CD8-positive, alpha-beta T cell (primary cell): ENCODE measurements at regions of chrX and their contacts with region 1.

Region 1: DNA sequence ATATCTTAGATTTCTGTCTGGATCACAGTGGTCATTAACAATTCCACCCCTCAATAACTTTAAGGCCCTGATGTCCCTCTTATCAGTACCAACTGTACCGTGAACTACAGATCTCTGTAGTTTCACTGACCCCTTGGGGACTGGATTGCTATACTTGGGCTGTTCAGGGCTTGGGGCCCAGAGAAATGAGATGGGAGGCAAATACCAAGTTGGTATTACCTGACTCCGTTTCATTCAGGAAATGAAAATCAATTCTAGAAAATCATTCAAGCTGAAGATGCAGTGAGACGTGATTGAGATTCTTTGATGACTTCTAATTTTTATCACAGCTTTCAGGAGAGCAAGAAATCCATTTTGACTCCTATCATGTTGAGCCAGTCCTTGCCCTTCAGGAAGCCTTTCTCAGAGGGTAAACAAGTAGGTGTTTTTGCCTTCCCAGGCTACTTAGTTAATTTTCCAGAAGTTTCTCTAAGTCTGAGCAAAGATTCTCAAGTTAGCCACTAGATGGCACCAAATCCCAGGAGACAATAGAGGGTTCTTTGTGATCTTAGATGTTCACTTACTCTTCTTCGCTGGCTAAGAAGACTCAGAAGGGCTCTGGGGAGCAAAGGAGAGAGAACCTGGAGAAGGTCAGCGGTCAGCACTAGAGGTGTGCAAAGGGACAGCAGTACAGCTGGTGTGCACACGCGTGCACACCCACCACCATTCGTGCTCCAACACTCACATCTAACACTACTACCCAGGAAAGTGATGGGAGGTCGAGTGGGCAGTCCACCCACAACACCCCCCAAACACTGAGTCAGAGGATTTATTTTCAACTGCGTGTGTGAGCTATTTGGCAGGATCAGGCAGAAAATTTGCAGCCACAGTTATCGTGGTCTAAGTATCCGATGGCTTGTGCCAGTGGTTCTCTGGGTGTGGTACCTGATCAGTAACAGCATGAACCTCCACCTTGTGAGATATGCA is 7.4 kb downstream of the HNRNPH2 start:
- DNase-seq: peak in 5 of 9 experiments; percentile 11 to 83 (median 38)
- ATAC-seq: peak; percentile 79
- H3K4me3 ChIP-seq: no peak overlapping the region
- H3K4me3 Mint-ChIP-seq: peak overlapping the region; percentile 55
- H3K27ac ChIP-seq: peak overlapping the region in 1 of 2 experiments; percentile 70
- H3K27ac Mint-ChIP-seq: peak overlapping the region; percentile 85
- H3K4me1 ChIP-seq: peaks cover 22% of the 10 kb centered on the region
- H3K4me1 Mint-ChIP-seq: peaks cover 59% of the 10 kb centered on the region
- H3K27me3 ChIP-seq: no peaks in the 10 kb centered on the region
- H3K27me3 Mint-ChIP-seq: no peaks in the 10 kb centered on the region
- CTCF ChIP-seq: peak; percentile 57

Region 2: DNA sequence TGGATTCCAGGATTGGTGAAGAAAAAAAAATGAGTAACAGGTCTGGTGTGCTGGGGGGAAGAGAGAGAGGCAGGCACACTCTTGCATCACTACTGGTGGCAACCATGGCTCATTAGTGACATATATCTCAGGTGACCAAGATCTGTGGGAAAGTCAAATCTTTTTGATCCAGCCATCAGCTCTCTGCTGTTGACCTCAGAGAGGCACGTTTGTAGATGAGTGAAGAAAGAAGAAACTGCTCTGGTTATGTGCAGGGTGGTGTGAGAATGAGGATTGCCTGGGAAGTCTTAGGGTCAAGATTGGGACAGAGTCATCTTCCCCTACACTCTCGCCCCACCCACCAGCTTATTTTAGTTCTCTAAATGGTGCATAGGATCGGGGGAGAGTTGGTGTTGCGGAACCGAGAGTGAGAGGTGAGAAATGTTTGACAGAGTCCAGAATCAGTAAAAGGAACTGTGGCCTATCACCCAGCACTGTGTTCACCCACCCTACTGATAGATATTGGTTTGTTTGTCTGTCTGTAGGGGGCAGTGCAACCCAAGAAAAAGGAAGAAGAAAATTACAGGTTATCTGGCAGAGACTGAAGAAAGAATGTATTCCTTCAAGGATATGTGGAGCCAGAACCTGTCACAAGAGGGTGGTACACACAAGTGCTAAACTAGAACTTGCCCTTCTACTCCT is 180.4 kb after region 1 on chrX:
- CTCF ChIA-PET with region 1: interaction called, 5 read pairs
- POLR2A ChIA-PET with region 1: interaction called, 4 read pairs
- intact Hi-C with region 1: loop called (anchors 5 kb)
- DNase-seq: peak in 5 of 9 experiments; percentile 13 to 76 (median 42)
- ATAC-seq: peak; percentile 72
- H3K4me3 ChIP-seq: no peak overlapping the region
- H3K4me3 Mint-ChIP-seq: no peak overlapping the region
- H3K27ac ChIP-seq: no peak overlapping the region
- H3K27ac Mint-ChIP-seq: no peak overlapping the region
- H3K4me1 ChIP-seq: no peaks in the 10 kb centered on the region
- H3K4me1 Mint-ChIP-seq: no peaks in the 10 kb centered on the region
- H3K27me3 ChIP-seq: no peaks in the 10 kb centered on the region
- H3K27me3 Mint-ChIP-seq: peaks cover 14% of the 10 kb centered on the region
- CTCF ChIP-seq: peak; percentile 65

Region 3: DNA sequence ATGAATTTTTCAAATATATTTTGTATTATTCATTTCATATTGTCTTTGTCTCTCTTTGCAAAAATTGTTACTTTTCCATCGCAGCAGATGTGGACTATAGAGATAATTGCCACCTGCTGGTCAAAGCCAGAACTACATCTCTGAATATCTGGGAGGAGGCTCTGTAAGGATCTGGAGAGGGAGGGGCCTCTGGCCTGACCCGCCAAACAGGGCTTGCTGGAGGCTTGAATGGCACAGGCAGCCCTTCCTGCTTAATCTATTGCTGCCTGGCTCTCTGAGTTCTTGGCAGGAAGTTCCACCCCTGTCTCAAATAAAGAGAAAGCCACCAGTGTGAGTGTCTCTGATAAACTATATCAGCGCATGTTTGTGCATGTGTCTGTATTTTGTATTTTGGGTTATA is 383.9 kb after region 1 on chrX:
- CTCF ChIA-PET with region 1: interaction called, 5 read pairs
- POLR2A ChIA-PET with region 1: interaction called, 3 read pairs
- intact Hi-C with region 1: loop called (anchors 1 kb)
- DNase-seq: peak; percentile 46 to 89 (median 79)
- ATAC-seq: peak; percentile 100
- H3K4me3 ChIP-seq: no peak overlapping the region
- H3K4me3 Mint-ChIP-seq: peak overlapping the region; percentile 58
- H3K27ac ChIP-seq: no peak overlapping the region
- H3K27ac Mint-ChIP-seq: no peak overlapping the region
- H3K4me1 ChIP-seq: peaks cover 4% of the 10 kb centered on the region
- H3K4me1 Mint-ChIP-seq: peaks cover 8% of the 10 kb centered on the region
- H3K27me3 ChIP-seq: no peaks in the 10 kb centered on the region
- H3K27me3 Mint-ChIP-seq: no peaks in the 10 kb centered on the region
- CTCF ChIP-seq: peak; percentile 73

Region 4: DNA sequence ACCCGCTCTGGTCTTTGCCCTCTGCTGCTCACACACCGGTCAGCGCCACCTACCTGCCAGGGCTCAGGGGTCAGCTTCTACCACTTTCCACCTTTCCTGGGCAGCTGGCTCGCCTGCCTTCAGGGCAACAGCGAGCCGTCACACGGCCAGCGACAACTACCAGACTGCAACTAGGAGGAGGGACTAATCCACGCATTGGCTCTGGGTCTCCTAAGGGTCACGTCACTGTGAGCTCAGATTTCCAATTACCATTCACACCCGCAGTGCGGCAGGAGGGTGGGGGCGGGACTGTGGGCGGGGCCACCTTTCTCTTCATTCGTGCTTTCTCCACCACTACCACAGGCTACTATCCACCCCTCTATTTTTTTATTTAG is 740.3 kb after region 1 on chrX and contains the start of gene BEX5:
- CTCF ChIA-PET with region 1: no interaction called
- POLR2A ChIA-PET with region 1: no interaction called
- intact Hi-C with region 1: loop called in 1 of 2 experiments (anchors 5 kb)
- DNase-seq: peak; percentile 6 to 79 (median 51)
- ATAC-seq: peak; percentile 96
- H3K4me3 ChIP-seq: peak within 1 kb of the TSS; percentile 48 to 63
- H3K4me3 Mint-ChIP-seq: peak within 1 kb of the TSS; percentile 98
- H3K27ac ChIP-seq: peak within 1 kb of the TSS; percentile 60 to 64
- H3K27ac Mint-ChIP-seq: peak within 1 kb of the TSS; percentile 96
- H3K4me1 ChIP-seq: peaks cover 5% of the 10 kb centered on the region
- H3K4me1 Mint-ChIP-seq: peaks cover 8% of the 10 kb centered on the region
- H3K27me3 ChIP-seq: no peaks in the 10 kb centered on the region
- H3K27me3 Mint-ChIP-seq: peaks cover 10% of the 10 kb centered on the region
- CTCF ChIP-seq: no peak
- total RNA-seq, gene BEX5: 14.0 to 14.4 TPM